ENCODE measurements at regions of chr15 and their contacts with region 1.

Region 1: DNA sequence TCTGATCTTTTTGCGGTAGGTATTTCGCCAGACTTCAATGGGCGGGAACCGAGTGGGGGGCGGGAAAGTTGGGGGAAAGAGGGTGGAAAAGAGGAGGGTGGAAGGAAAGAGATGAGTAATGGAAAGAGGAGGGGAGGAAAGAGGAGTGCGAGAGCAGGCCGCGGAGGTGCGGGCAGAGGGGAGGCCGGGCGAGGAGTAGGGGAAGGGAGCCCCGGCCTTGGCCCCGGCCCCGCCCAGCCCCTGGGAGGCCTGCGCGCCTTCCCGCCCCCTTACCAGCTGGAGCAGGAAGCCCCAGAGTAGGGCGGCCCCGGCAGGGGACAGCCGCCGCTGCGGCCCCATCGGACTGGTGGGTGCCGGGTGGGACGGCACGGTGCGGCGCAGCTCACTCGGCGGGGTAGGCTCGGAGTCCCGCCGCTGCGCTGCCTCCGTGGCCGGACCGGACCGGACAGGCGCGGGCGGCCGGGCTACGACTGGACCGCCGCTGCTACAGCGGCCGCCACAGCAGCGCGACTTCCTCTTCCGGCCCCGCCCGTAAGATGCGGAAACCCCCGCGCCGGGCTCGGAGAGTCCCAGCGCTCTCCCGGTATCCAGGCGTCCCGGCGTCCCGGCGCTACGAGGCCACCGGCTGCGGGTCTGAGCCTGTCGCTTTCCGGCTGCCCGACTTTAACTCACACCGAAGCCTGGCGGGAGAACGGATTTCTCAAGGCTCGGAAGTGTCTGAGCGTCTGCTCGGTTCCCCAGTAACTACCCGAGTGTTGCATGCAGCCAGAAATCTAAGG is at the start of gene SPPL2A:
- DNase-seq: peak; percentile 87 to 88
- ATAC-seq: peak; percentile 85 to 94 (median 92)
- H3K4me3 ChIP-seq: peak within 1 kb of the TSS; percentile 56 to 92 (median 80)
- H3K27ac ChIP-seq: peak within 1 kb of the TSS; percentile 94 to 100 (median 98)
- H3K4me1 ChIP-seq: peaks cover 0 to 49% (median 19%) of the 10 kb centered on the region in 9 donors
- H3K27me3 ChIP-seq: no peaks in the 10 kb centered on the region
- CTCF ChIP-seq: peak in 1 of 9 donors; percentile 13
- total RNA-seq, gene SPPL2A: 68.1 to 152 (median 98.1) TPM

Region 2: GRCh38 chr15:50424066-50424890 is 341.1 kb before region 1 on chr15 and contains the start of gene USP8:
- intact Hi-C with region 1: loop called in 1 of 10 experiments (anchors 10 kb)
- DNase-seq: peak; percentile 96 to 97
- ATAC-seq: peak; percentile 99
- H3K4me3 ChIP-seq: peak within 1 kb of the TSS; percentile 69 to 95 (median 82)
- H3K27ac ChIP-seq: peak within 1 kb of the TSS; percentile 28 to 94 (median 88)
- H3K4me1 ChIP-seq: peaks cover 3 to 36% (median 20%) of the 10 kb centered on the region in 9 donors
- H3K27me3 ChIP-seq: no peaks in the 10 kb centered on the region
- CTCF ChIP-seq: no peak
- total RNA-seq, gene USP8: 40.2 to 53.6 (median 45.7) TPM

Region 3: DNA sequence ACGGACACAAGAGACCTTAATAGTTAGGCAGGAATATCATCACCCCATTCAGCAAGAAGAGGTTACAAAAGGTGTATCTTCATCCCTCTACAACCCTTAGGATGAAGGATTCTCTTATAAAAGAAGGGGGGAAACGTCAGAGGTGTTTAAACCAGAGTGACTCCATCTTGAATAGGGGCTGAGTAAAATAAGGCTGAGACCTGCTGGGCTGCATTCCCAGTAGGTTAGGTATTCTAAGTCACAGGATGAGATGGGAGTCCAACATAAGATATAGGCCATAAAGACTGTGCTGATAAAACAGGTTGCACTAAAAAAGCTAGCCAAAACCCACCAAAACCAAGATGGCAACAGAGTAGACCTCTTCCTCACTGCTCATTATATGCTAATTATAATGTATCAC is 95.3 kb before region 1 on chr15:
- intact Hi-C with region 1: no loop called
- DNase-seq: no peak
- ATAC-seq: peak in 1 of 8 donors; percentile 35
- H3K4me3 ChIP-seq: no peak overlapping the region
- H3K27ac ChIP-seq: no peak overlapping the region
- H3K4me1 ChIP-seq: peaks cover 0 to 31% (median 9%) of the 10 kb centered on the region in 9 donors
- H3K27me3 ChIP-seq: no peaks in the 10 kb centered on the region
- CTCF ChIP-seq: no peak

Region 4: DNA sequence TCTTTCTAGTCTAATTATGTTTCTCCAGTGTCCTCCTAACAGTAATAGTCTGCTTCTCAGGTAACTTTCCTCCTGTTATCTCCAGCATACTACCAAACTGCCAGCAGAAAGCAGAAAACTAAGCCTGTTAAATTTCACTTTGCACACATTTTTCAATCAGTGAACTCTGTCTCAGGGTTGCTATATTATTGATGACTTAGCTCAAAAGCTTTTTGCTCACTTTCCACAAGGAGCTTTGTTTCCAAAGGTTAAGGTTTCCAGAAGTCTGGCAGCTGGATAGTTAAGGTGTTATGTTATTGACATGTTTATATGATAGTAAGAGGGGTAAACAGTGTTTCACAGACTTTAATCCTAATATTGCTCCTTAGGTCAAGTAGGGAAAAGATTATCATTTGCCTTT is 83.9 kb before region 1 on chr15:
- intact Hi-C with region 1: loop called in 7 of 10 experiments (anchors 1 to 10 kb)
- DNase-seq: no peak
- ATAC-seq: no peak
- H3K4me3 ChIP-seq: no peak overlapping the region
- H3K27ac ChIP-seq: no peak overlapping the region
- H3K4me1 ChIP-seq: peaks cover 6 to 77% (median 49%) of the 10 kb centered on the region in 9 donors
- H3K27me3 ChIP-seq: no peaks in the 10 kb centered on the region
- CTCF ChIP-seq: no peak

Region 5: DNA sequence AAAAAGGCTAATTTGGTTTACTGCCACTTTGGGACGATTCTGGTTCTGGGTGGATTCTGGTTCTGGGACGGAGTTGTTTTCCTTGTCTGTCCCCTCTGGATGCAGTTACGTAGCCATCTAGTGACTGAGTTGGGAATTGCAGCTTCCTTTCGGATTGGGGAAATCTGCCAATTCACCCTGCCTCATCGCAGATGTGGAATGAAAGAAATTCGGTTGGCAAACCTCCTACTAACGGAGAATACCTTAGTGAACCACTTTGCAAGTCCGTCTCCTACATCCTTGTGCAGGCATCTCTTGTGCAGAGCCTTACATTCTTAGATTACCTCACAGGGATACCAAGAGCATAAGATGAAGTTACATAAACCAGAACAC is 111.6 kb after region 1 on chr15:
- intact Hi-C with region 1: loop called in 7 of 10 experiments (anchors 5 to 10 kb)
- DNase-seq: peak in 1 of 2 donors; percentile 84
- ATAC-seq: peak; percentile 44 to 84 (median 77)
- H3K4me3 ChIP-seq: peak overlapping the region in 9 of 10 donors; percentile 14 to 57 (median 45)
- H3K27ac ChIP-seq: peak overlapping the region in 3 of 10 donors; percentile 34 to 70 (median 35)
- H3K4me1 ChIP-seq: peaks cover 0 to 57% (median 0%) of the 10 kb centered on the region in 9 donors
- H3K27me3 ChIP-seq: no peaks in the 10 kb centered on the region
- CTCF ChIP-seq: peak; percentile 92 to 98 (median 95)

Measured in heart right ventricle (tissue), 16 donors.